PC-9 (cell line): ENCODE measurements at regions of chr20 and their contacts with region 1.

Region 1: DNA sequence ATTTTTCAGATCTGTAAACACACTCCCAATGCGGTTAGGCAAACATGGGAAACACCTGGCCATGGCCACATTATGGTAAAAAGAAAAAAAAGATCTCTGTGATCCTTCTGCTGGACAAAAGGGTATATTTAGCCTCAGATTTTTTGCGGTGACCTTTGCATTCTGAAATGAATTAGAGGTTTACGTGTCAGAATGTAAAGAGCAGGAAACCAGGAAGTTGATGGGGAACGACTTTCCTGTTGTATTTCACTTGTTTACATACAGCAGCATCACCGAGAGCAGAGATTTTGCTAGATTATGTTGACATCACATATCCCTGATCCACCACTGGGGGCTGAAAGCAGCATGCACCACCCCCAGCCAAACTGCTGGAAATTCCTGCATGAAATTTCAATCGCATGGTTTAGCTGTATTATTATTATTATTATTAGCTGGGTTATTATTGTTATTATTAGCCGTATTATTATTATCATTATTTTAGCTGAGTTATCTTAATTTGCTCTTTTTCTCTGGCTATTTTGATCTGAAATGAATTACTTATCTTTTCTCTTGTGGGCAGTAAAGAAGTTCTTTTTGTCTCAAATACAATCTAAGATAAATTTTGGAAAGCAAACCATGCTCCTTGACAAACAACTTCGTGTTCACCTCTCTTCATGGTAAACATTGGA is 189.4 kb downstream of the ZFP64 start:
- DNase-seq: peak in 1 of 2 experiments; percentile 46
- H3K4me3 ChIP-seq: no peak overlapping the region
- H3K27ac ChIP-seq: no peak overlapping the region
- H3K4me1 ChIP-seq: peaks cover 10% of the 10 kb centered on the region
- H3K27me3 ChIP-seq: no peaks in the 10 kb centered on the region
- CTCF ChIP-seq: no peak

Region 2: DNA sequence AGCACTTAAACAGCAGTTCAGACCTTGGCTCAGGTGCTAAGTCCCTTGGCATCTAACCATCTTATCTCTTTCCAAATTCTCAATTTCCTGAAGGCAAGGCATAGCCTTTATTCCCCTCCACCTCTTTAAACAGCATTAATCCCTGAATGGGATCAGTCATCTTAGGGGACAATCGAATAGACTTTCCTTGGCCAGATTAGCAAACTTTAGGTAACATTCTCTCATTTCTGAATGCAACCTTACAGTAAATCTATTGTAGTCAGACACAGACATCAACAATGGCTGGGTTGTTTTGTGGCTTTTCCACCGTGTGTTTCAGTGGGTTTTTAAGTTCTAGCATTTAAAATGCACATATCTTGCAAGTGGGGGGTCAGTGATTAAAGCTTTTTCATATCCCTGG is 290.7 kb before region 1 on chr20:
- CTCF ChIA-PET with region 1: no interaction called
- POLR2A ChIA-PET with region 1: interaction called, 13 read pairs
- intact Hi-C with region 1: no loop called
- DNase-seq: no peak
- H3K4me3 ChIP-seq: no peak overlapping the region
- H3K27ac ChIP-seq: no peak overlapping the region
- H3K4me1 ChIP-seq: peaks cover 12% of the 10 kb centered on the region; the same call in 1 of the 2 replicates
- H3K27me3 ChIP-seq: no peaks in the 10 kb centered on the region
- CTCF ChIP-seq: no peak

Region 3: GRCh38 chr20:52675375-52675774 is 673.2 kb after region 1 on chr20:
- CTCF ChIA-PET with region 1: no interaction called
- POLR2A ChIA-PET with region 1: no interaction called
- intact Hi-C with region 1: no loop called
- DNase-seq: no peak
- H3K4me3 ChIP-seq: no peak overlapping the region
- H3K27ac ChIP-seq: no peak overlapping the region
- H3K4me1 ChIP-seq: no peaks in the 10 kb centered on the region
- H3K27me3 ChIP-seq: peaks cover 5% of the 10 kb centered on the region; the same call in 1 of the 2 replicates
- CTCF ChIP-seq: no peak